Endothelial cell of umbilical vein (primary cell): ENCODE measurements at regions of chr10 and their contacts with region 1.

Region 1: DNA sequence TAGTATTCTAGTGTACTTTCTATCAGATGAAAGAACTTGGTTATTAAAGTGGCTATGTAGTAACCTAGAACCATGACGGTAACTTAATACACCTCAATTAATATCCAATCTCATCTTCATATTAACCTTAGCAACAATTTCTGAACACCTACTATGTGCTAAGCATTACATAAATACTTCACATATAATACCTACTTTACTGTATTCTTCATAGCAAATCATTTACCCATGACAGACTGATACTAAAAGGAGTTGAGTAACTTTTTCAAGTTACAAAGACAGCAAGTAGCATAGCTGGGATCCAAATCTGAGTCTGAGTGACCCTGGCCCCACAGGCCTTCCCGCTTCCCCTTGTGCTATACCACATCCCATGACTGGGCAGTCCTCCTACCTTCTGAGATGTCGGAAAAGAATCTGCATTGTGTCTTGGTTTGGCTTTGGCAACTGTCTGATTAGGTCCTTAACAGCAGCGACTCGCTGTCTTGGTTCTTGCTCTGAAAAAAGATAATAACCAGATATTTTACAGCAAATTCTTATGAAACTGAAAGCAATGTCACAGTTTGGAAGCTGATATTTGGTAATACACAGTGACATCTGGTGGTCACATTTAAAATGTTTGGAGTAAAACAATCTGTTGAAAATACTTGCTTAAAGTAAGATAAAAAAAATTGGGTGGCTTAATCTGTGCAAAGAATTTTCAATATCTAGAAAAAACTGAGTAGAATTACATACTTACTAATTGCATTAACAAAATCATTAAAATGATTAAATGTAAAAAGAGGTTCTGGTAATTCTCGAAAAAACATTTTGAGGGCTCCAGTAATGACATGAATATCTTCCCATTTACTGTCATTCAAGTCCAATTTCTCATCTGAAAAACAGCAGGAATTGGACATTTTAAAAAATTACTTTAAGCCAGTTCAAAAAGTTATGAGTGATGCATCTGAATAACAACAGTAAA is 120.1 kb downstream of the ARHGAP12 start:
- DNase-seq: peak; percentile 81
- H3K4me3 ChIP-seq: no peak overlapping the region
- H3K27ac ChIP-seq: peak overlapping the region; percentile 69
- H3K4me1 ChIP-seq: peaks cover 4% of the 10 kb centered on the region
- H3K27me3 ChIP-seq: no peaks in the 10 kb centered on the region
- CTCF ChIP-seq: peak; percentile 10 to 27
- POLR2A ChIP-seq: no peak

Region 2: GRCh38 chr10:30687698-30688219 is 1120.8 kb before region 1 on chr10:
- CTCF ChIA-PET with region 1: interaction called, 15 read pairs
- POLR2A ChIA-PET with region 1: no interaction called
- dilution Hi-C with region 1: no loop called
- intact Hi-C with region 1: loop called (anchors 1 kb)
- DNase-seq: peak; percentile 82
- H3K4me3 ChIP-seq: no peak overlapping the region
- H3K27ac ChIP-seq: no peak overlapping the region
- H3K4me1 ChIP-seq: peaks cover 2% of the 10 kb centered on the region
- H3K27me3 ChIP-seq: peaks cover 6 to 10% of the 10 kb centered on the region in 2 experiments
- CTCF ChIP-seq: peak; percentile 92
- POLR2A ChIP-seq: no peak

Region 3: DNA sequence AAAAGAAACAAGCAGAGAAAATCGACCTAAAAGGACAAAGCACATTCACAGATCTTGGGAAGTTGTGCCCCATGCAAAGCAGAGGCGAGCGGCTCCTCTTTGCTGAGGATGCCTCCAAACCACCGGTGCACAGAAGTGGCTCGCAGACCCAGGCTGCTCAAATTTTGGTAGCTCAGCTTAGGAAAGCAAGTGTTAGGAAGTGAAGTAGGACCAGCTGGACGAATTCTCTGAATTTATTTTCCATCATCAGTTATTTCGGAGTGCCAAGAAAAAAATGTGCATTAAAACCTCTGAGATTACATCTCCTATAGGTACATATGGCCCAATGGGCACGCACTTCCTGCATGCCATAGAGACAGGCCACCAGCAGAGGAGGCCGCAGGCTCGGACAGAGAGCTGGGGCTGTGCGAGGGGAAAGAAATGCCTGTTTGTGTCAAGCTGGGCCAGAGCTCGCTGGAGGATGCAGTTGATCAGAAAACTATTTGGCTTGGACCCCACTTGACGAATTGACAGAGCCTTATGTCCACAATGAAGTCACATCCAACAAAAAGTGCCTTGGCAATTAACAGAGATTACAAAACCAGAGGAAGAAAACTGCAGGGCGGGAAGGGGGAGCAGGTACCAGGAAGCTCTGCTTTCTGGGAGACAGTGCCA is 1056.7 kb before region 1 on chr10:
- CTCF ChIA-PET with region 1: interaction called, 22 read pairs
- POLR2A ChIA-PET with region 1: no interaction called
- dilution Hi-C with region 1: no loop called
- intact Hi-C with region 1: no loop called
- DNase-seq: peak; percentile 76
- H3K4me3 ChIP-seq: no peak overlapping the region
- H3K27ac ChIP-seq: no peak overlapping the region
- H3K4me1 ChIP-seq: peaks cover 5% of the 10 kb centered on the region
- H3K27me3 ChIP-seq: no peaks in the 10 kb centered on the region
- CTCF ChIP-seq: peak; percentile 90 to 98
- POLR2A ChIP-seq: no peak

Region 4: DNA sequence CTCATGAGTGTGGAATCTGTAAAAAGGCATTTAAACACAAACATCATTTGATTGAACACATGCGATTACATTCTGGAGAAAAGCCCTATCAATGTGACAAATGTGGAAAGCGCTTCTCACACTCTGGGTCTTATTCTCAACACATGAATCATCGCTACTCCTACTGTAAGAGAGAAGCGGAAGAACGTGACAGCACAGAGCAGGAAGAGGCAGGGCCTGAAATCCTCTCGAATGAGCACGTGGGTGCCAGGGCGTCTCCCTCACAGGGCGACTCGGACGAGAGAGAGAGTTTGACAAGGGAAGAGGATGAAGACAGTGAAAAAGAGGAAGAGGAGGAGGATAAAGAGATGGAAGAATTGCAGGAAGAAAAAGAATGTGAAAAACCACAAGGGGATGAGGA is 281.9 kb before region 1 on chr10:
- CTCF ChIA-PET with region 1: no interaction called
- POLR2A ChIA-PET with region 1: no interaction called
- dilution Hi-C with region 1: no loop called
- intact Hi-C with region 1: loop called (anchors 10 kb)
- DNase-seq: peak; percentile 26
- H3K4me3 ChIP-seq: no peak overlapping the region
- H3K27ac ChIP-seq: peak overlapping the region; percentile 13
- H3K4me1 ChIP-seq: peaks cover 24% of the 10 kb centered on the region
- H3K27me3 ChIP-seq: no peaks in the 10 kb centered on the region
- CTCF ChIP-seq: no peak
- POLR2A ChIP-seq: no peak

Region 5: DNA sequence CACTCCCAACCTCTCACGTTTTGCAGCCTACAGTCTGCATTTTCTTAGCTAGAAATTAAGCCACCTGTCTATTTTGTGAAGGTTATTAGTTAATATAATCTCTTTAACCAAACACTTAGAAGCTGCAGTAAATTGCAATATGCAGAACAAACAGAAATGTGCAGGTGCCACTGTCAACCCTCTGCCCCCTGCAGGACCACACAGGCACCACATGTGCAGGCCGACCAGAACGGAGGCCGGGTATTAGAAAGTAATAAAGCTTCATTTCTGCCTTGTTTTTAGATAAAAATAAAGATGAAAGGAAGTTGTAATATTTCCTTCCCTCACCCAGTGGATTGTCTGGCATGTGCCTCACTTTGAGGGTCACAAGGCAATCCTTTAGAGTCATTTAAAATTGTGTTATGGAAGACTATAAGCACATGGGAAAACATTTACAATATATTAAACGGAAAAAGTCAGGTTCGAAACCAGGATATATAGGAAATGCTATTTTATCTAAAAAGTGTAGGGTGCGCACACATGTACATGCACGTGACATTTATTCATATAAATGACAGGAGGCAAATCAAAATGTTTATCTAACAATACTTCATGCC is 38.1 kb before region 1 on chr10:
- CTCF ChIA-PET with region 1: interaction called, 14 read pairs
- POLR2A ChIA-PET with region 1: no interaction called
- dilution Hi-C with region 1: no loop called
- intact Hi-C with region 1: no loop called
- DNase-seq: peak; percentile 71
- H3K4me3 ChIP-seq: no peak overlapping the region
- H3K27ac ChIP-seq: no peak overlapping the region
- H3K4me1 ChIP-seq: peaks cover 7% of the 10 kb centered on the region
- H3K27me3 ChIP-seq: no peaks in the 10 kb centered on the region
- CTCF ChIP-seq: peak; percentile 84 to 86
- POLR2A ChIP-seq: no peak